ENCODE measurements at regions of chr22 and their contacts with region 1.

Region 1: DNA sequence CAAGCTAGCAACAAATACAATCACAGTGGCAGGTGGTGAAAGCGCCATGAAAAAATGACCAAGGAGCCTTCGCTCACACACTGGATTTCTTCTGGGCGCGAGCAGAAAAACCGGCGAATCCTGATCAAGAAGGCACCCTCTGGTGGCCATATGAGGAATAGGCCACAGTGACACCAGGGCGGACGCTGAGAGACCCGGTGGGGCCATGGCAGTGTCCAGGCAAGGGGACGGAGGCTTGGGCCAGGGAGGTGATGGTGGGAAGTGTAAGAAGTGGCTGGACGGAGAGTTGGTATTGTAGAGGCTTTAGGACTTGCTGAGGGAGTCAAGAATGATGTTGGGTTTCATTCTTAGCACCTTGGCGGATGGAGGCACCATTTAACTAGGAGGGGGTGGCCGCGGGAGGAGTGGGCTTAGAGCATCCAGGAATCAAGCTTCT is 16.9 kb upstream of the RAC2 start:
- DNase-seq: peak in 9 of 10 donors; percentile 41 to 83 (median 61)
- ATAC-seq: peak; percentile 76 to 85
- H3K4me3 Mint-ChIP-seq: peak overlapping the region in 6 of 10 donors; percentile 9 to 53 (median 30)
- H3K27ac Mint-ChIP-seq: peak overlapping the region; percentile 10 to 90 (median 54)
- H3K4me1 Mint-ChIP-seq: peaks cover 16 to 26% (median 24%) of the 10 kb centered on the region in 4 donors
- H3K27me3 Mint-ChIP-seq: peaks cover 0 to 1% (median 0%) of the 10 kb centered on the region in 5 donors

Region 2: DNA sequence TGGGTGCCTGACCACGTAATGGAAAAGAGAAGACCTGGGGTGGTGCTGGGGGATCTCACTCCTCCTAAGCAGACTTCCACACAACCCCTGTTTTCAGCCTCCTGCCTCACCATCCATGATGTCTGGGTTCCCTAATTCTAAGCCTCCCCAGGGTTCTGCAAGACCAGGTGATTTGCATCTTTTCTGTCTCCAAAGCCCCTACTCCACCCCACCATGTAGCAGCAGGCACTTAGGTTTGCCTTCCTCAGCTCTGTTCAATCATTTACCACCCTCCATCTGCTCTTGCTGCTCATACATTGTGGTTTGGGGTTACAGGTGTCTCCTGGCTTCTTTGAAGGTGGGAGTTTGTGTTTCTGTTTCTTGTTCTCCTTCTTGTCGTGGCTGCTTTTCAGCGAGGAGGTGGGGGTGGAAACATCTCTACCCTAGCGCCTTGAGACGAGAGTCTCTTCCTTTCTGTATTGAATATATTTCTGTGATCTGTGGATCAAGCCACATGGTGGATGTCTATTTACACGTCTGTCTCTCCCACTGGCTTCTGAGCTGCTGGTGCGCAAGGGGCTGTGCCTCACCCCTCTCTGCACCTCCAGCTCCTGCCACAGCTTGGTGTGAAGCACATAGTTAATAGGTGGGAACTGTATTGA is 42.0 kb before region 1 on chr22:
- POLR2A ChIA-PET with region 1: interaction called, 14 read pairs
- DNase-seq: peak in 9 of 10 donors; percentile 59 to 95 (median 83)
- ATAC-seq: peak; percentile 85 to 88
- H3K4me3 Mint-ChIP-seq: peak overlapping the region; percentile 67 to 91 (median 80)
- H3K27ac Mint-ChIP-seq: peak overlapping the region; percentile 86 to 99 (median 97)
- H3K4me1 Mint-ChIP-seq: peaks cover 48 to 96% (median 93%) of the 10 kb centered on the region in 4 donors
- H3K27me3 Mint-ChIP-seq: no peaks in the 10 kb centered on the region

Region 3: DNA sequence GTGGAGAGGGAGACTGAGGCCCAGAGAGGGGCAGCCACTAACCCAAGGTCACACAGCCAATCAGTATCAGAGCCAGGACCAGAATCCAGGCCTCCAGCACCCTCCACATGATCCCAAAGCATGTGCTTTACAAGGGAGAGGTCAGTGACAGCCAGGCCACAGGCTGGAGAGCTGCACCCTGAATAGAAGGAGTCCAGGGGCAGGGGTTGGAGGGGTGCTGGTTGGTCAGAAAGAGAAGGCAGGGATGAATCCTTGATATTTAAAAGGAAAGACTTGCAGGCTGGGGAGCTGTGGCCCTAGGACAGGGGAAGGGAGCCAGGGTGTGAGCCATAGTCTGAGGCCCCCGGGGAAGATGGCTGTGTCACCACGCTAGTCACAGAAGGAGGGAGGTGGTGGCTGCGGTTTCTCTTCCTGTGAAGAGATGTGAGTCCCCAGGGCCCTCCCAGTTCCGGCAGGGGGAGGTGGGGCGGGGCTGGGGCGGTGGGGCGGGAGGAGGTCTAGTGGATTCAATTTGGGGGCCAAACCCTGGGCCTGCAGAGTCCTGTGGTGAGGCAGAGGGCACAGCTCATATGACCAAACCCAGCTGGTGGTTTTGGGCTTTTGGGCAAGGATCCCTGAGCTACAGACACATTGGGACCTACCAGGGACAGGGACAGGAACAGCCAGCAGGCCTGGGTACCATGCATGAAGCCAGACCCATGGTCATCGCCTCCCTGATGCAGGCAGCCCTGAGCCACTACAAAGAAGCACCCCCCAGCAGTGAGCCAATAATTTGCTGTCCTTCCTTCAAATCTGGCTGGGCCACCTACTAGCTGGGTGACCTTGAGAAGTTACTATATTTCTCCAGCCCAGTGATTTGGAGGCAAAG is 30.9 kb before region 1 on chr22:
- POLR2A ChIA-PET with region 1: interaction called, 34 read pairs
- DNase-seq: peak; percentile 77 to 96 (median 88)
- ATAC-seq: peak; percentile 69 to 84
- H3K4me3 Mint-ChIP-seq: peak overlapping the region; percentile 79 to 95 (median 88)
- H3K27ac Mint-ChIP-seq: peak overlapping the region; percentile 97 to 100 (median 98)
- H3K4me1 Mint-ChIP-seq: peaks cover 62 to 92% (median 90%) of the 10 kb centered on the region in 4 donors
- H3K27me3 Mint-ChIP-seq: no peaks in the 10 kb centered on the region

Region 4: GRCh38 chr22:37309211-37310074 is 48.5 kb after region 1 on chr22:
- POLR2A ChIA-PET with region 1: interaction called, 11 read pairs
- DNase-seq: peak in 8 of 10 donors; percentile 39 to 77 (median 62)
- ATAC-seq: peak; percentile 31 to 51
- H3K4me3 Mint-ChIP-seq: peak overlapping the region; percentile 63 to 91 (median 84)
- H3K27ac Mint-ChIP-seq: peak overlapping the region; percentile 71 to 100 (median 96)
- H3K4me1 Mint-ChIP-seq: peaks cover 43 to 97% (median 89%) of the 10 kb centered on the region in 4 donors
- H3K27me3 Mint-ChIP-seq: no peaks in the 10 kb centered on the region

Measured in naive thymus-derived CD8-positive, alpha-beta T cell (primary cell).